Pancreas (tissue), 10 donors: ENCODE measurements at regions of chr12 and their contacts with region 1.

Region 1: DNA sequence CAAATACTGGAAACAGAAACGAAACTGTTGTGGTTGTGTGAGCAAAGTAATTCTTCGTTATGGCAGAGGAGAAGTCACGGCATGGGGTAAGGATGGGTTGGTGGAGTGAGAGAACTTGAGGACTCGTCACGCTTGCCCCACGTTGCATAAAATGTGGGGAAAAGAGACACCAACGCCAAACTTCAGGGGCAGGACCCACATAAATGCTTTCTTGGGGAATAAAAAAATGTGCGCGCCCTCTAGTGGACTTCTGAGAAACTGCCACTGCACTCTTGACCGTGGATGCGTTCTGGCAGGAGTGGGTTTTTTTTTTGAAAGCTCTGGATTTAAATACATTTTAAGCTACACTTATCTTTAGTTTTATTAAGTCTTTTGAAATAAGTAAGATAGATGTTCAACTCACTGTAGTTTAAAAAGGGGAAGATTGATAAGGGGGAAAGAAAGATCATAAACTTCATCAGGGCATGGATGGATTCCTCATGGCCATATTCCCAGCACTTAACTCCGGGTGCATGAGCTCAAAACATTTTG is 4.1 kb upstream of the IGF1 start:
- DNase-seq: peak in 5 of 6 donors; percentile 6 to 59 (median 32)
- ATAC-seq: peak; percentile 67 to 84 (median 82)
- H3K4me3 ChIP-seq: peak overlapping the region in 1 of 4 donors; percentile 15
- H3K27ac ChIP-seq: peak overlapping the region in 1 of 4 donors; percentile 14
- H3K4me1 ChIP-seq: no peaks in the 10 kb centered on the region
- H3K27me3 ChIP-seq: no peaks in the 10 kb centered on the region
- CTCF ChIP-seq: peak; percentile 77 to 92 (median 88)

Region 2: GRCh38 chr12:102169922-102170621 is 314.4 kb before region 1 on chr12:
- intact Hi-C with region 1: loop called in 1 of 3 experiments (anchors 10 kb)
- DNase-seq: peak in 1 of 6 donors; percentile 15
- ATAC-seq: peak; percentile 47 to 77 (median 64)
- H3K4me3 ChIP-seq: no peak overlapping the region
- H3K27ac ChIP-seq: no peak overlapping the region
- H3K4me1 ChIP-seq: no peaks in the 10 kb centered on the region
- H3K27me3 ChIP-seq: no peaks in the 10 kb centered on the region
- CTCF ChIP-seq: peak; percentile 36 to 55 (median 42)

Region 3: DNA sequence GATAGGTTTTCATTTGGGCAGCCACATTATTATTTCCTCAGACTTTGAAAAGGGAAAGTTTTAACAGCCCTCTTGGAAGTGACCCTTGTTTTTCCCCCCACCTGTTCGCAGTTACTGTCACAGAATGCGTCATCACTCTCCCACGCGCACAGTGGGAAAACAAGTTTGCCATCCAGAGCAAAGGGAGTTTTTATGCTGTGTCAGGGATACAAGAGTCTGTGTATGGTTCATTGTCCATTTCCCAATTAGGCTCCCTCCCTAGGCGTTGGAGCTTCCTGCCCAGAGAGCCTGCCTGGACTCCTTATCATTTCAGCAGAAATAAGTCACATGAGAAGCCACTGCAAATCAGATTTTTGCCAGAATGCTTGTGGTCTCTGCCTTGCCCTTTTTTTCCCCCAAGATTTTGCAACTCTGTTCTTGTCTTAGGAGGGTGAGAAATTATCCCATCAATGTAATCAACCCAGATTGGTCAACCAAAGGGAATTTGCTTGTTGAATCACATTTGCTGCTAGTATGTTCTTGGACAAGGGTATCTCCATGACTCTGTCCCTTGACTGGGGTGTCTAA is 108.2 kb before region 1 on chr12:
- intact Hi-C with region 1: no loop called
- DNase-seq: no peak
- ATAC-seq: peak in 1 of 4 donors; percentile 73
- H3K4me3 ChIP-seq: no peak overlapping the region
- H3K27ac ChIP-seq: no peak overlapping the region
- H3K4me1 ChIP-seq: no peaks in the 10 kb centered on the region
- H3K27me3 ChIP-seq: no peaks in the 10 kb centered on the region
- CTCF ChIP-seq: no peak